Ascending aorta (tissue), 2 donors: ENCODE measurements at regions of chr4 and their contacts with region 1.

Region 1: GRCh38 chr4:57163530-57164459 is 53.6 kb upstream of the IGFBP7 start:
- DNase-seq: peak; percentile 26 to 89
- H3K4me3 ChIP-seq: peak overlapping the region; percentile 54 to 71
- H3K27ac ChIP-seq: peak overlapping the region; percentile 47 to 73
- H3K4me1 ChIP-seq: peaks cover 0 to 2% of the 10 kb centered on the region in 2 donors
- H3K27me3 ChIP-seq: no peaks in the 10 kb centered on the region
- CTCF ChIP-seq: peak; percentile 80 to 96 (median 84)

Region 2: GRCh38 chr4:57119054-57119651 is 44.6 kb before region 1 on chr4:
- intact Hi-C with region 1: loop called (anchors 2 kb)
- DNase-seq: peak in 1 of 2 donors; percentile 89
- H3K4me3 ChIP-seq: peak overlapping the region; percentile 36 to 59
- H3K27ac ChIP-seq: peak overlapping the region; percentile 89 to 96
- H3K4me1 ChIP-seq: peaks cover 14 to 37% of the 10 kb centered on the region in 2 donors
- H3K27me3 ChIP-seq: no peaks in the 10 kb centered on the region
- CTCF ChIP-seq: no peak

Region 3: GRCh38 chr4:57291911-57292310 is 128.1 kb after region 1 on chr4:
- intact Hi-C with region 1: loop called (anchors 5 kb)
- DNase-seq: no peak
- H3K4me3 ChIP-seq: no peak overlapping the region
- H3K27ac ChIP-seq: no peak overlapping the region
- H3K4me1 ChIP-seq: no peaks in the 10 kb centered on the region
- H3K27me3 ChIP-seq: no peaks in the 10 kb centered on the region
- CTCF ChIP-seq: no peak

Region 4: DNA sequence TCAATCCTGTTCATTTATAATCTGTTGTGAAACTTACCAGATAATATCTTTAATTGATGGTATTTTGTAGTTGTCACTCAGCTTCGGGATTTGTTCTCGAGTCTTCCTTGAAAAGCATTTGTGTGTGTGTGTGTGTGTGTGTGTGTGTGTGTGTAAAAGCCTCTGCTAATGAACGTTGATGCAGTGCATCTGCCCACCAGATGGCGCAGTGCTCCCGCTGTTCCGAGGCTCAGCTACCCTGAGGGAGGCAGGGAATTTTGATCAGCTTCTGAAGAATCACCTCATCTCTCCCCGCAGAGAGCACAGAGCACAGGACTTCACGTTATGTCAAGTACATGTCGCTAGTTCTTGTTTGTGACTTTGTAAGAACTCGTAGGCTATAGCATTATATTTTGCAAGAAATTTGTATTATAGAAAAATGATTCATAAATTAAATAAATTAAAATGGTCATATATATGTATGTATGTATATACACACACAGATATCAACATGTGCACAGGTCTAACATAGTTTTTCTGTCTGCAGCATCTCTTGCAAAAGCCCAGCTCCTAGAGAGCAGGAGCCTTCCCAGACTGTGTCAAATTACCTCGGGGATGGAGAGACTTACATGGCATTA is 263.1 kb after region 1 on chr4:
- intact Hi-C with region 1: loop called (anchors 5 kb)
- DNase-seq: peak in 1 of 2 donors; percentile 74
- H3K4me3 ChIP-seq: no peak overlapping the region
- H3K27ac ChIP-seq: no peak overlapping the region
- H3K4me1 ChIP-seq: peaks cover 0 to 8% of the 10 kb centered on the region in 2 donors
- H3K27me3 ChIP-seq: no peaks in the 10 kb centered on the region
- CTCF ChIP-seq: peak; percentile 44 to 79 (median 62)